ENCODE measurements at regions of chr3 and their contacts with region 1.

Region 1: DNA sequence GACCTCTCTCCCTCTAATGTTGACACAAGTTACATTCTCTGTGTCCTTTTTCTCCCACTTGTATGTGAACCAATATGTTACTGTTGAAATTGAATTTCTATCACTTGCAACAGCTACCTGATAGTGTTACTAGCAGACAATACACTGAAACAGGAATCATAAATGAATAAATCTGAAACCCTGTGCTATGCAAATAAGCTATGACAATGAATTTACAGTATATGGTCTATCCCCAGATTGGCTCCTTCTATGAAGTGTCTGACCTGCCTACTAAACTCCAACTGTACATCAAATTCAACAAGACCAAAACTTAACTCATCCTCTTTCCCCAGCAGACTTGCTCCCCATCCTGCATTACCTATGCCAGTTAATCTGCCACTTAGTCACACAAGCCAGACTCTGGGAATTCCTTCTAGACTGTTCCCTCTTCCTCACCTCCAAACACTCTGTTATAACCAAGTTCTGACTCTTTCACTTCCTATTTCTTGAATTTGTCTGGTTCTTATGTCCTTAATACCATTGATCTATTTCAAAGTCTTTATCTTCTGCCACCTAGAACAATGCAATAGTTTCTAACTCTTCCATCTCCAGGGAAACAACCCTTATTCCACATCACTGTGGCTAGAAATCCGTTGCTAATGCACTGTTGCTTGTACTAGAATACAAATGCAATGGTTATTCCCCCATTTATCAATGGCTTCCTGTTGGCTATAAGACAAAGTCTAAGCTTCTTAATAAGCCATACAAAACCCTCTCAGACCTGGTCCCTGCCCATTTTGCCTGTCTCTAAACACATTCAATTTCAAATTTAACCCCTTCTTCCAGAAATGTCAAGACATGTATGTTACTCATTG is 13.4 kb upstream of the ZNF639 start:
- DNase-seq: no peak
- ATAC-seq: no peak
- H3K4me3 ChIP-seq: no peak overlapping the region
- H3K27ac ChIP-seq: no peak overlapping the region
- H3K4me1 ChIP-seq: no peaks in the 10 kb centered on the region
- H3K27me3 ChIP-seq: no peaks in the 10 kb centered on the region; a peak in 1 of 5 replicates
- CTCF ChIP-seq: no peak
- EP300 ChIP-seq: no peak
- POLR2A ChIP-seq: no peak
- RAD21 ChIP-seq: no peak

Region 2: GRCh38 chr3:179158336-179159039 is 151.0 kb before region 1 on chr3:
- CTCF ChIA-PET with region 1: no interaction called
- POLR2A ChIA-PET with region 1: no interaction called
- in situ Hi-C with region 1: no loop called
- intact Hi-C with region 1: no loop called
- DNase-seq: no peak
- ATAC-seq: no peak
- H3K4me3 ChIP-seq: no peak overlapping the region
- H3K27ac ChIP-seq: no peak overlapping the region
- H3K4me1 ChIP-seq: no peaks in the 10 kb centered on the region
- H3K27me3 ChIP-seq: no peaks in the 10 kb centered on the region
- CTCF ChIP-seq: no peak
- EP300 ChIP-seq: no peak
- POLR2A ChIP-seq: no peak
- RAD21 ChIP-seq: no peak

Region 3: DNA sequence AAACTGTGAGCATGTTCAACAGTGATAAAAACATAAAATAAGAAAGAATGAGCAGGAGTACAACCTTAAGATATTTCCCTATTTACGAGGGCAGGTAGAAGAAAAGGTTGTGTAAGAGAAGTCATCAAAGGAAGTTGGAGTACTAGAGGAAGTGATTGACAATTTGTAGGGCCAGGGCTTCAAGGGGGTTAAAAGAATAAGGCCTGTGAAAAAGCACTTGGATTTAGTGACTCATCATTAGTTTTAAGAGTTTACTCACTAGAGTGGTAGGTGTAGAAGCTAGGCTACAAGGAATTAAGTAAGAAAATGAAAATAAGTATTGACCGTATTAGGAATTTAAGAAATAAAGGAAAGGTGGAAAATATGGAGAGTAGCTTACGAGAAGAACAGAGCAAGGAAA is 82.1 kb before region 1 on chr3:
- CTCF ChIA-PET with region 1: no interaction called
- POLR2A ChIA-PET with region 1: no interaction called
- in situ Hi-C with region 1: no loop called
- intact Hi-C with region 1: loop called (anchors 10 kb)
- DNase-seq: no peak
- ATAC-seq: no peak
- H3K4me3 ChIP-seq: no peak overlapping the region
- H3K27ac ChIP-seq: no peak overlapping the region
- H3K4me1 ChIP-seq: no peaks in the 10 kb centered on the region
- H3K27me3 ChIP-seq: no peaks in the 10 kb centered on the region
- CTCF ChIP-seq: no peak
- EP300 ChIP-seq: no peak
- POLR2A ChIP-seq: no peak
- RAD21 ChIP-seq: no peak

Region 4: DNA sequence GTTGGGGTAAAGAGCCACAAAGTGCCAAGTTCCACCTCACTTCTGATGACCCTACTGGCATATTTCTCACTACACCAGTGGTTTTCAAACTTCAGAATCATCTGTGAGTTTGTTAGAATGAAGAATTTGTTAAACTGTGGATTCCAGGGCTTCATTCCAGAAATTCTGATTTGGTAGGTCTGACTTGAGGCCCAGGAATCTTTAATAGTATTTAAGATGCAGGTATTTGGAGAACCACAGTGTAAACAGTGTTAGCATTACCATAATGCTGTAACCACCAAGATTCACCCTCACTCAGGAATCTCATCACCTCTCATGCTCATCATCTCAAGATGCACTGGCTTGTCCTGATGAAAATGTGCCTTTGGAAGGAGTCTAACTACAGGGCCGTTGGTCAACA is 64.6 kb before region 1 on chr3:
- CTCF ChIA-PET with region 1: no interaction called
- POLR2A ChIA-PET with region 1: no interaction called
- in situ Hi-C with region 1: no loop called
- intact Hi-C with region 1: no loop called
- DNase-seq: no peak
- ATAC-seq: no peak
- H3K4me3 ChIP-seq: no peak overlapping the region
- H3K27ac ChIP-seq: no peak overlapping the region
- H3K4me1 ChIP-seq: peaks cover 6% of the 10 kb centered on the region
- H3K27me3 ChIP-seq: no peaks in the 10 kb centered on the region
- CTCF ChIP-seq: no peak
- EP300 ChIP-seq: no peak
- POLR2A ChIP-seq: no peak
- RAD21 ChIP-seq: no peak

Region 5: DNA sequence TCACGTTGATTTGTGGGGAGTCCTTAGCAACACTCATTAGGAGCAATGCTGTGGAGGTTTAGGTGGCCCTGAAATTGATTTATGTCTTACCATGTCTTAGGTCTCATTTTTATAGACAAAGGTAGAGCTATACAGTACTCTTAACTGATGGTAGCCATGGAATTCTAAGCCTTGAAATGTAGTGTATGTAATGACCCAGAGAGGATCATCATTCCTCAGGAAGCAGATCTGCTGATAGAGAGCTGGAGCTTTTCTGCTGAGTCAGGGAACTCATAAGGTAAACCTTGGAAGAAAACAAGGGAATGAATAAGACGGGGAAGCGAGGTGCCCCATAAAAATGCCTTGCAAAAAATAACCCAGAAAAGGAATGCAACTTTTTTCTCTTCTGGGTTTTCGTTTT is 20.6 kb before region 1 on chr3:
- CTCF ChIA-PET with region 1: no interaction called
- POLR2A ChIA-PET with region 1: no interaction called
- in situ Hi-C with region 1: no loop called
- intact Hi-C with region 1: loop called (anchors 2 kb)
- DNase-seq: no peak
- ATAC-seq: no peak
- H3K4me3 ChIP-seq: no peak overlapping the region
- H3K27ac ChIP-seq: no peak overlapping the region
- H3K4me1 ChIP-seq: peaks cover 16% of the 10 kb centered on the region
- H3K27me3 ChIP-seq: no peaks in the 10 kb centered on the region
- CTCF ChIP-seq: no peak
- EP300 ChIP-seq: no peak
- POLR2A ChIP-seq: no peak
- RAD21 ChIP-seq: no peak

Measured in HepG2 (cell line).